ENCODE measurements at regions of chr10 and their contacts with region 1.

Region 1: GRCh38 chr10:77641788-77642397 is 4.3 kb upstream of the KCNMA1 start:
- DNase-seq: peak; percentile 78
- H3K4me3 ChIP-seq: no peak overlapping the region
- H3K27ac ChIP-seq: no peak overlapping the region
- H3K4me1 ChIP-seq: no peaks in the 10 kb centered on the region
- H3K27me3 ChIP-seq: peaks cover 22 to 27% of the 10 kb centered on the region in 2 experiments
- CTCF ChIP-seq: peak; percentile 45 to 61
- POLR2A ChIP-seq: no peak

Region 2: GRCh38 chr10:77165445-77166208 is 476.3 kb before region 1 on chr10:
- CTCF ChIA-PET with region 1: interaction called, 594 read pairs
- POLR2A ChIA-PET with region 1: no interaction called
- dilution Hi-C with region 1: no loop called
- intact Hi-C with region 1: loop called (anchors 1 kb)
- DNase-seq: peak; percentile 77
- H3K4me3 ChIP-seq: no peak overlapping the region
- H3K27ac ChIP-seq: peak overlapping the region; percentile 80
- H3K4me1 ChIP-seq: peaks cover 41% of the 10 kb centered on the region
- H3K27me3 ChIP-seq: no peaks in the 10 kb centered on the region
- CTCF ChIP-seq: peak; percentile 59 to 66
- POLR2A ChIP-seq: no peak

Region 3: DNA sequence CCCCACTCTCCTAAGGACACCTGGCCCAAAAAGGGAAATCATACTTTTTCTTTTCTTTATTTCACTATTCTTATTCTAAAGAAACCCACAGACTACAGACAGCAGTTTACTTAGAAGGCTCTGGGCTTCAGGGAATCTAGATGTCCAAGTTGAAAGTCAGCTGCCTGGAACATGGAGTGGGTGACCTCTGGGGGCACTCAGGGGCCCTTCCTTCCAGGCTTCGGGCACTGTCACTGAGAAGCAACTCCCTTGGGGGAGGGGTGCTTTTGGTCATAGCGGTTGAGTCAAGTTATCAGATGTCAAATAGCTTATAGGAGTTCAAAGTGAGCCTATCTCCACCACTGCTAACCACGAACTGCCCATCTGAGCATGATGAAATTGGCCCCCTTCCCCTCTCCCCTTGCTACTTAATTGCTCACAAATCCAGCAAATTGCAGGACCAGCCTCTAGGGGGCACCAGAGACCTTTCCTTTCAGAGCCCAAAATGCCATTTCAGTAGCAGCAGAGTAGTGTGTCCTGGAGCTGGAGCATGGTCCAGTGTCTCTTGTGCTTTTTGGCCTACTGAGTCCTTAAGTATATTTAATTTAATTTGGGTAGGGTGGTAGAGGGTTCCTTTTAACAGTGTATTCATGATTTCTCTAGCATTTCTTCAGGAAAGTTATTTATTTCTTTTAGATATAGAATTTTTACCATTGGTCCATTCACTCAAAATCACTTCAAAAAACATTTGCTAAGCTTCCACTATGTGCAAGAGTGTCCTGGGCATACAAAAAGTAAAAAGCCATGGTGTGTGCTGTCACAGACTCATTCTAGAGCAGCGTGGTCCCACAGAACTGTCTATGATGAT is 468.1 kb before region 1 on chr10:
- CTCF ChIA-PET with region 1: interaction called, 594 read pairs
- POLR2A ChIA-PET with region 1: no interaction called
- dilution Hi-C with region 1: no loop called
- intact Hi-C with region 1: loop called (anchors 1 kb)
- DNase-seq: peak; percentile 75
- H3K4me3 ChIP-seq: no peak overlapping the region
- H3K27ac ChIP-seq: no peak overlapping the region
- H3K4me1 ChIP-seq: peaks cover under 1% of the 10 kb centered on the region
- H3K27me3 ChIP-seq: no peaks in the 10 kb centered on the region
- CTCF ChIP-seq: peak; percentile 86 to 90
- POLR2A ChIP-seq: no peak

Region 4: DNA sequence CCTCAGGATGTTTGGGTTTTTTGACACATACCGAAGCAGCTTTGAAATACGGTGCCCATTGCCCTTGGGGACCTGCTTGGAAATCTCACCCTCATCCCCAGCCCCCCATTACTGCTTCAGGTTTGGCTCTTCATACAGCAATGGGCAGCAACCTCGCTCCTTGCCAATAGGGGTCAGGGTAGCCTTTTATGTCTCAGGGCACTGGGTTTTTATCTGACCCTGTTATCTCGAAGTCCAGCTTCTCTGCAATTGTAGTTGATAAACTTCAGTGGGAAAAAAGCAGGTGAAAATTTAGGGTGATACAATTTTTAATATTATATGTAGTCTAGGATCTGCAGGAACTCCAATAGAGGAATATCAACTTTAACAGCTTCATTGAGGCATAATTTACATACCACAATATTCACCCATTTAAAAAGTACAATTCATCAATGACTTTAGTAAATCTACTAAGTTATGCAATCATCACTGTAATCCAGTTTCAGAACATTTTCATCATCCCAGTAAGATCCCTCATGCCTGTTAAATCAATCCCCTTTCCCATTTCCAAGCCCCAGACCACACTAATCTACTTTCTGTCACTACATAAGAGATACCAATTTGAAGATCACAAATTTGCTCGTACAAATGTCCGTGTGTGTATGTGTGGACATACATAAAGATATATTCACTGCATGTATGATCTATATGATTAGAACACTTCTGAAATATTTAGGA is 390.4 kb before region 1 on chr10:
- CTCF ChIA-PET with region 1: interaction called, 114 read pairs
- POLR2A ChIA-PET with region 1: no interaction called
- dilution Hi-C with region 1: no loop called
- intact Hi-C with region 1: loop called (anchors 1 kb)
- DNase-seq: peak; percentile 55
- H3K4me3 ChIP-seq: no peak overlapping the region
- H3K27ac ChIP-seq: no peak overlapping the region
- H3K4me1 ChIP-seq: no peaks in the 10 kb centered on the region
- H3K27me3 ChIP-seq: peaks cover 0 to 2% of the 10 kb centered on the region in 2 experiments
- CTCF ChIP-seq: peak; percentile 67 to 72
- POLR2A ChIP-seq: no peak

Region 5: GRCh38 chr10:77297393-77297739 is 344.5 kb before region 1 on chr10:
- CTCF ChIA-PET with region 1: interaction called, 3 read pairs
- POLR2A ChIA-PET with region 1: no interaction called
- dilution Hi-C with region 1: no loop called
- intact Hi-C with region 1: loop called (anchors 1 kb)
- DNase-seq: no peak
- H3K4me3 ChIP-seq: no peak overlapping the region
- H3K27ac ChIP-seq: no peak overlapping the region
- H3K4me1 ChIP-seq: no peaks in the 10 kb centered on the region
- H3K27me3 ChIP-seq: peaks cover 0 to under 1% of the 10 kb centered on the region in 2 experiments
- CTCF ChIP-seq: no peak
- POLR2A ChIP-seq: no peak

Region 6: GRCh38 chr10:77494327-77494726 is 147.6 kb before region 1 on chr10:
- CTCF ChIA-PET with region 1: interaction called, 25 read pairs
- POLR2A ChIA-PET with region 1: no interaction called
- dilution Hi-C with region 1: no loop called
- intact Hi-C with region 1: loop called (anchors 2 kb)
- DNase-seq: no peak
- H3K4me3 ChIP-seq: no peak overlapping the region
- H3K27ac ChIP-seq: no peak overlapping the region
- H3K4me1 ChIP-seq: no peaks in the 10 kb centered on the region
- H3K27me3 ChIP-seq: peaks cover 0 to 2% of the 10 kb centered on the region in 2 experiments
- CTCF ChIP-seq: peak in 1 of 2 donors; percentile 9
- POLR2A ChIP-seq: no peak

Region 7: GRCh38 chr10:77669892-77670291 is 28.0 kb after region 1 on chr10:
- CTCF ChIA-PET with region 1: no interaction called
- POLR2A ChIA-PET with region 1: no interaction called
- dilution Hi-C with region 1: no loop called
- intact Hi-C with region 1: no loop called
- DNase-seq: no peak
- H3K4me3 ChIP-seq: no peak overlapping the region
- H3K27ac ChIP-seq: no peak overlapping the region
- H3K4me1 ChIP-seq: no peaks in the 10 kb centered on the region
- H3K27me3 ChIP-seq: no peaks in the 10 kb centered on the region
- CTCF ChIP-seq: no peak
- POLR2A ChIP-seq: no peak

Region 8: DNA sequence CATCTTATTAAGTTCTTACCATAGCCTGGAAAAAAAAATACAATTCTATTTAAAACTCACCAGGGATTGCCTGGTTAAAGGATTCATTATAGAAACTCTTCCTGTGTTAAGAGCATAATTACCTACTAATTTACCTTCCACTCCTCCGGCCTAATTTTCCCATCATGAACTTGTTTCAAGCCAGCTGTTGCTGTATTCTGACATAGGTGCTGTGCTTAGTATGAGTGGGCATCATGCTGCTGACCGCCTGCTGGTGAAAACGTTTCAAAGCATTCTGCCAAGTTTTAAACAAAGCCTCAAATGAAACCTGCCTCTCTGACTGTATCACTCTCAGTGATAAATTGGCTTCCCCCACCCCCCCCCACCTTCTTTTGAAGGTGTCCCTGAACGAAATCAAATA is 43.5 kb after region 1 on chr10:
- CTCF ChIA-PET with region 1: no interaction called
- POLR2A ChIA-PET with region 1: no interaction called
- dilution Hi-C with region 1: no loop called
- intact Hi-C with region 1: no loop called
- DNase-seq: no peak
- H3K4me3 ChIP-seq: no peak overlapping the region
- H3K27ac ChIP-seq: no peak overlapping the region
- H3K4me1 ChIP-seq: no peaks in the 10 kb centered on the region
- H3K27me3 ChIP-seq: peaks cover 4 to 11% of the 10 kb centered on the region in 2 experiments
- CTCF ChIP-seq: no peak
- POLR2A ChIP-seq: no peak

Measured in endothelial cell of umbilical vein (primary cell).